Prostate gland (tissue), 2 donors: ENCODE measurements at regions of chr3 and their contacts with region 1.

Region 1: GRCh38 chr3:141460097-141460704 is 26.6 kb upstream of the RASA2 start:
- DNase-seq: peak; percentile 88
- H3K4me3 ChIP-seq: no peak overlapping the region
- H3K27ac ChIP-seq: no peak overlapping the region
- H3K4me1 ChIP-seq: peaks cover 13% of the 10 kb centered on the region
- H3K27me3 ChIP-seq: no peaks in the 10 kb centered on the region
- CTCF ChIP-seq: peak; percentile 59 to 89 (median 87)
- POLR2A ChIP-seq: no peak

Region 2: GRCh38 chr3:140845882-140846281 is 614.3 kb before region 1 on chr3:
- intact Hi-C with region 1: no loop called
- DNase-seq: no peak
- H3K4me3 ChIP-seq: no peak overlapping the region
- H3K27ac ChIP-seq: no peak overlapping the region
- H3K4me1 ChIP-seq: no peaks in the 10 kb centered on the region
- H3K27me3 ChIP-seq: peaks cover 4% of the 10 kb centered on the region
- CTCF ChIP-seq: no peak
- POLR2A ChIP-seq: no peak

Region 3: GRCh38 chr3:140943781-140944552 is 516.2 kb before region 1 on chr3:
- intact Hi-C with region 1: no loop called
- DNase-seq: no peak
- H3K4me3 ChIP-seq: peak overlapping the region in 1 of 2 donors; percentile 85
- H3K27ac ChIP-seq: peak overlapping the region; percentile 95 to 98
- H3K4me1 ChIP-seq: no peaks in the 10 kb centered on the region
- H3K27me3 ChIP-seq: no peaks in the 10 kb centered on the region
- CTCF ChIP-seq: no peak
- POLR2A ChIP-seq: no peak

Region 4: GRCh38 chr3:141561426-141562034 is 101.3 kb after region 1 on chr3:
- intact Hi-C with region 1: loop called (anchors 2 kb)
- DNase-seq: peak; percentile 47
- H3K4me3 ChIP-seq: no peak overlapping the region
- H3K27ac ChIP-seq: no peak overlapping the region
- H3K4me1 ChIP-seq: no peaks in the 10 kb centered on the region
- H3K27me3 ChIP-seq: no peaks in the 10 kb centered on the region
- CTCF ChIP-seq: peak; percentile 79 to 99 (median 92)
- POLR2A ChIP-seq: no peak